ENCODE measurements at regions of chr3 and their contacts with region 1.

Region 1: DNA sequence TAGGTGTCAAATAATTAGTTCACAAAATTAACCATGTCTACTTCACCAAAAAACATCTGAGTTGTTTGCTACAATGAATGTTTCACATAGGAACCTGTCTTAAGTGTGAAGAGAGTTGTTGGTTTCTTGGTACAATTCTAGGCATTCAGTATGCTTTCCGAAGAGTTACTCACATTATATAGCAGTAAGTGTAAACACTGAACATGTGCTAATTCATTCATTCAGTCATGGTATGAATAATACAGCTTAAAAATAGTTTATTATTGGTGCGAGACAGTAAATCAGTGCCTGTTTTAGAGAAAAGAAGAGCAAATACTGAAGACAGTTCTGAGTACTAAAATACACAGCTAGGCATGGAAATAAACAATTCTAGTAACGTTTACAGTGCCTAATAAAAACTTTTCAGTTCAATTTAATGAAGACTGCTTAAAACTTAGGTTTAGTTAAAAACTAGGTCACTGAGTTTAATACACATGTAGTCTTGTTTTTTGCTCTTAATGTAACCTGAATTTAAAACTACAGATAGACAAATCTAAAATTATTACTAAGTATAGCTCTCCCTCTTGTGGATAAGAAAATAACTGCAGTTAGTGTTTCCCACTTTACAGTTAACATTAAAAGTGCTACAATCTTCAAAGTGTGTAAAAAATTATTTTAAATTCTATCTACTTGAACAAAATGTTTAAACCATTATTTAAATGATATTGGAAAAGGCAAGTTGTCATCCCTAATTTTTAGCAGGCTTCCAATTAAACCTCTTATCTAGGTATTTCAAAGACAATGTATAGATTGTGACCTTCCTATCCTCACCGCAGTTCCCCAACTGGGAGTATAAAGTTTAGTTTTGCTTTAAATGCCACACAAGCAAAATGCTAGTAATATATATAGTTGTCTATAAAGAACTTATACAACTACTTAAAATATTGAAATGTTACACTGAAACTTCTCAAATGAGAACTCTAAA is 20.1 kb upstream of the ZCWPW2 start:
- DNase-seq: no peak
- H3K4me3 ChIP-seq: no peak overlapping the region
- H3K27ac ChIP-seq: no peak overlapping the region
- H3K4me1 ChIP-seq: no peaks in the 10 kb centered on the region
- H3K27me3 ChIP-seq: no peaks in the 10 kb centered on the region
- CTCF ChIP-seq: peak; percentile 27 to 46 (median 30)
- EP300 ChIP-seq: no peak
- POLR2A ChIP-seq: no peak

Region 2: DNA sequence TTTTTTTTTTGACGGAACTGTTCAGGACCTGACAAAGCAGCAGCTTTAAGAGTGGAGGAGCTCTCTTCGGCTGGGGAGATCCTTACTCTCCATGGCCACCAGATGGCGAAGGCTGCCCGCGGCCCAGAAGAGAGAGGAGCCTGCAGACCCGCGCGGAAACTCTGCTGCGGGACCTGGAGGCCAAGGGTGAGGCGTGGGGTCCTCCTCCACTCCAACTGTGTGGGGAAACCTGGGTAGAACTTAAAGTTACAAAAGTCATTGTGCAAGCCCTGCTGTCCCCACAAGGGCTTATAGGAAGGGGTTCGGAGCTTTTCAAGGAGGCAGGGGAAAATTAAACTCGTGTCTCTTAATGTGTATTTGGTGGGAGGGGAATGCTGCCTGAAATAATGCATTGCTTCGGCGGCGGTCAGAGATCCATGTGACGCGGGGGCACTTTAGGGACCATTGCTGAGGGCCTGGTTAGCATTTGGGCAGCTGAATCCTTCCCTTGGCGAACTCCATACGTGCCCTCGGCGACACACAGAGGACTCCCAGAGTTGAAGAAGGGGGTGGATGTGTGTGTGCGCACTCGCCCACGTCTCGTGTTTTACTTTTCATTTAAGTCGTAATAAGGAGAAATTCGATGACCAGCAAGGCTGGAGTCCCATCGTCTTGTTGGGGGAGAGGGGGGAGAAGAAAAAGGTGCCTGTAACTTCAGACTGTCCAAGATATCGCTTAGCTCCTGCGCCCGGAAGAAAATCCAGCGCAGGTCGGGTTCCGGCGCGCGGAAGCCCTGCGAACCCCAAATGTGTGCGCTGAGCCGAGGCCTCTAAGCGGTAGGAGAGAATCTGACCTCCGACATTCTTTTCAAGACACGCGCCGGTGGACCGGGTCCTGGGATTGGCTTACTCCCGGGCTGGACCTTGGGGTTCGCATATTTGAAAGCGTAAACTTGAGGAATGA is 616.1 kb before region 1 on chr3:
- intact Hi-C with region 1: loop called in 2 of 4 experiments (anchors 5 to 10 kb)
- DNase-seq: peak; percentile 48 to 77 (median 67)
- H3K4me3 ChIP-seq: peak overlapping the region; percentile 48
- H3K27ac ChIP-seq: no peak overlapping the region
- H3K4me1 ChIP-seq: peaks cover 4% of the 10 kb centered on the region
- H3K27me3 ChIP-seq: no peaks in the 10 kb centered on the region
- CTCF ChIP-seq: peak; percentile 41 to 51 (median 48)
- EP300 ChIP-seq: no peak
- POLR2A ChIP-seq: no peak

Measured in ovary (tissue), 10 donors.